Dendritic cell treated with granulocyte-macrophage colony-stimulating factor and Interleukin-4, amounts not matched to agents 40 ng/mL and 50 ng/mL, for 4 days (primary cell): ENCODE measurements at regions of chr2 and their contacts with region 1.

Region 1: GRCh38 chr2:68774569-68775271 is 40.1 kb downstream of the ARHGAP25 start:
- H3K4me3 Mint-ChIP-seq: peak overlapping the region; percentile 45
- H3K27ac Mint-ChIP-seq: peak overlapping the region; percentile 51
- H3K4me1 Mint-ChIP-seq: peaks cover 84% of the 10 kb centered on the region
- H3K27me3 Mint-ChIP-seq: no peaks in the 10 kb centered on the region

Region 2: DNA sequence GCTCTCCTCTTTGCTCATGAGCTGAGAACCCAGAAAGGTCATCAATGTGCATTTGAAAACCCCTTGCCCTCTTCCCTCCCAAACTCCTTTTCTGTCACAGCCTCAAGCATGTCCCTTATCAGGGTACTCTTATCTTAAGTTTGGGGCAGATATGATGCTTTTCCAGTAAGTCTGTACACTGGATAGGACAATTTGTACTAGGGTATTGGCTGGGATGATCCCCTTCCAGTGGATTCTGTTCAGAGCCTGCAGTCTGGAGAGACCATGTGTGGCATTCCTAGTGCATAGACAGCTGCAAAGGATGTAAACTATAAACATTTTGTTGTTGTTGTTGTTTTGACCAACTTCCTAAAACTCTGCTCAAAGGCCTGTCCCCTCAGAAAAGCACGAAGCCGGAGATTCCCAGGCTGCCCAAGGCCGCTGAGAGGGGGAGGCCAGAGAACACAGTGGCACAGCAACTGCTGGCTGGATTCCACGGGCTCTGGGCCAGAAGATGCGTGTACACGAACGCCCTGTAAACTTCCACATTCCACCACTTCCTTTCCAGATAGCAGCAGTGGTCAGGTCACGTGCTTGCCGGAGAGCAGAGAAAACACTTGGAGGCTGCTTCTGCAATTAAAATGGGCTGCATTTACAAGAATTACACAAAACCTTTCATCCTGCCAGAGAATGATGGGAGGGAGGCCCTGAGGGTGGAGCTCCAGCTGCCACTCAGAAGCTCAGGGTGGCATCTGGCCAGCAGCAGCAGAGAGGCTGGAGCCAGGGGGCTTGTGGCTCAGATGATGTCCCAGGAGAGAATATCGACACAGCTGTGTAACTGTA is 54.4 kb after region 1 on chr2:
- intact Hi-C with region 1: loop called (anchors 10 kb)
- H3K4me3 Mint-ChIP-seq: peak overlapping the region; percentile 45
- H3K27ac Mint-ChIP-seq: peak overlapping the region; percentile 91
- H3K4me1 Mint-ChIP-seq: peaks cover 83% of the 10 kb centered on the region
- H3K27me3 Mint-ChIP-seq: no peaks in the 10 kb centered on the region